OCI-LY7 (cell line): ENCODE measurements at regions of chr12 and their contacts with region 1.

Region 1: GRCh38 chr12:110937104-110937641 is 16.8 kb upstream of the MYL2 start:
- DNase-seq: peak; percentile 62
- H3K4me3 ChIP-seq: no peak overlapping the region
- H3K27ac ChIP-seq: no peak overlapping the region
- H3K4me1 ChIP-seq: no peaks in the 10 kb centered on the region
- CTCF ChIP-seq: peak; percentile 99

Region 2: DNA sequence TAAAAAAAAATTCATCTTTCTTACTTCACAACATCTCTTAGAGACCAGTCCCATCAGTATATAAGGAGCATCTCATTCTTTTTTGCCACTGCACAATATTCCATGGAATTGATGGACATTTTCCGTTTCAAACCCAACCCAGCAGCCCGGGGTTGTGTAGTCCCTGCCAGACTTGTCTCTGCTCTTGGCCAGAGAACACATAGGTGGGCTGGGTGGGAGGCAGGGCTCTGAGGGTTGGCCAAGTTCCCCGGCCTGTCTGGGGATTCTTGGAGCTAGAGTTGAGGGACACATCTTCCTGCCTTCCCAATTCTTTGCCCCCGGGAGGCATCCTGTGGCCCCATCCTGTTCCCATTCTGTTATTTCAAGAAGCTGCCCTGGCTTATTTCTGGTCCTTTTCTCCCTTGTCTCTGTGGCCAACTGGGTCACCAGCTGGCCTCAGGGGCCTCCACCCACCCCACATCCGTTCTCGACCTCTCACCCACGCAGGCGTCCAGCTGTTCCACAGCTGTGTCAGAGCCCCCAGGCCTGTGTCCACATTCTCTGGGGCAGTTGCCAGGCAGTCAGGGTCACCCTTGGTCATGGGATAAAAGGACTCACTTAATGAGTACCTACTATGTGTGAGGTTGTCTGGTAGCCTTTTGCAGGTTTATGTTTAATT is 142.4 kb before region 1 on chr12:
- CTCF ChIA-PET with region 1: no interaction called
- POLR2A ChIA-PET with region 1: no interaction called
- intact Hi-C with region 1: no loop called
- DNase-seq: no peak
- H3K4me3 ChIP-seq: no peak overlapping the region
- H3K27ac ChIP-seq: no peak overlapping the region
- H3K4me1 ChIP-seq: peaks cover 3% of the 10 kb centered on the region
- CTCF ChIP-seq: no peak

Region 3: DNA sequence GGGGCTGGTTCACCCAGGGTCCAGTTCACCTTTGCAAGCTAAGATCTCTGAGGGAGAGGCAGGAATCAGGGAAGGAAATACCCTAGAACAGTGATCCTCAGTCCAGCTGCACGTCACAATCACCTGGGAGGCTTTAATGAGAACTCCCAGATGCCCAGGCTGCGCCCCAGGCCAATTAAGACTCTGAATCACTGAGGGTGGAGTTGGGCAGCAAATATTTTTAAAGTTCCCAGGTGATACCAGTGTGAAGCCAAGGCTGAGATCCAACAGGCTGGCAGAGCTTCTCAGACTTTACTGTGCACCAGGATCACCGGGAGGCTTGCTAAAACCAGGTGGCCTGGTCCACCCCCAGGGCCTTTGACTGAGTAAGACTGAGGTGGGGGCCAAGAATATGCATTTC is 40.6 kb before region 1 on chr12:
- CTCF ChIA-PET with region 1: no interaction called
- POLR2A ChIA-PET with region 1: interaction called, 3 read pairs
- intact Hi-C with region 1: loop called (anchors 1 kb)
- DNase-seq: no peak
- H3K4me3 ChIP-seq: no peak overlapping the region
- H3K27ac ChIP-seq: no peak overlapping the region
- H3K4me1 ChIP-seq: no peaks in the 10 kb centered on the region
- CTCF ChIP-seq: no peak

Region 4: GRCh38 chr12:111174251-111174960 is 237.2 kb after region 1 on chr12:
- CTCF ChIA-PET with region 1: no interaction called
- POLR2A ChIA-PET with region 1: no interaction called
- intact Hi-C with region 1: loop called (anchors 5 kb)
- DNase-seq: peak; percentile 38
- H3K4me3 ChIP-seq: no peak overlapping the region
- H3K27ac ChIP-seq: no peak overlapping the region
- H3K4me1 ChIP-seq: peaks cover 8% of the 10 kb centered on the region
- CTCF ChIP-seq: peak; percentile 74

Region 5: DNA sequence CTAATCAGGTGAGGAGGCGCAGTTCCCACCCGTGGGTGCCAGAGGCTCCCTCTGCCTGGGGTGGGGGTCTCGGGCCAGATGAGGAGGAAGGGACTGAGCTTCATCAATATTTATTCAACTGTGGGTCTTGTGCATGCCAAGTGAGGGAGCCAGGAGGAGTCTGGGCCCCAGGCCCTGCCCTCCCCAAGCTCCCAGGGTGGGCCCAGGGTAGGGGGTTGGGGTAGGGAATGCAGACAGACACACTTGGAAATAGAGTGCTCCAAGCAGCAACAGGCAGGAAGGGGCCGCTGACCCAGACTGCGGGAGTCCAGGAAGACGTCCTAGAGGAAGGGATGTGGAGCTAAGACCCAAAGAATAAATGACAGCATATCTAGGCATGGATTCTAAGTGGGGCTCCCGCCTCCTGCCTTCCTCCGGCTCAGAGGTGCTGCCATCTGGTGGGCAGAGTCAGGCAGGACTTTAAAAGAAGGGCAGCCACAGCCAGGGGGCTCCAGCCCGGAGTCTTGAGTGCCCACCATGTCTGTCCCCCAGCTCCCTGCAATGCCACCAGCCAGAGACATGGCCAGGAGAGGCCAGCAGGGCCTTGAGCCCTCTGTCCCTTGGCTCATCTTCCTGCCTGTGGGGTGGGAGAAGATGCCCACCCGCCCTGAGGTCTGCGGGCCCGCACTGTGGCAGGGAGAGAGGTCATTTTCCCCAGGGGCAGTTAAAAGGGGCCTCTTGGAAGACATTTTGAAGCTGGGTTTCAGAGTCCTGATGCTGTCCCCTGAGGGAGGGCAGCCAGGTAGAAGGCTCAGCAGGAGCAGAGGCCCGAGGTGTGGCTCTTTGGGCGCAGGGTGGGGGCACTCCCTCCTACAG is 361.6 kb after region 1 on chr12:
- CTCF ChIA-PET with region 1: no interaction called
- POLR2A ChIA-PET with region 1: no interaction called
- intact Hi-C with region 1: loop called (anchors 1 kb)
- DNase-seq: peak; percentile 62
- H3K4me3 ChIP-seq: no peak overlapping the region
- H3K27ac ChIP-seq: no peak overlapping the region
- H3K4me1 ChIP-seq: no peaks in the 10 kb centered on the region
- CTCF ChIP-seq: peak; percentile 89

Region 6: DNA sequence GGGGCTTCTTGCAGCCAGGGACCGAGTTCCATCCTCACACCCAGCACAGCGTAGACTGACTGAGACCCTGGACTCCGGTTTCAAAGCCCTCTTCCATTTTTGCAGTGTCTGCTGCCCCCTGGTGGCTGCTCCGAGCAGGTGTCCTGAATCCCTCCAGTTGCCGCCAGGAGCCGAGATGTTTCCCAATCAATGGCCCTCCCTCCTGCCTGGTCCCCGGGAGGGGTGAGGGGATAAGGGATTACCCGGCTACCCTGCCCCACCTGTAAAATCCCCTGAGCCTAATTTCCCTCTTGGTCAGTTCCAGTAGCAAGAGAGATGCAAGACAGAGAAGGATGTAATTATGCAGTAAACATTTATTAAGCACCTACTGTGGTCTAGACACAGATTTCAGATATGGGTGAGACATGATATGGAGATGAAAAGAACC is 376.7 kb after region 1 on chr12:
- CTCF ChIA-PET with region 1: no interaction called
- POLR2A ChIA-PET with region 1: no interaction called
- intact Hi-C with region 1: loop called (anchors 1 kb)
- DNase-seq: peak; percentile 63
- H3K4me3 ChIP-seq: no peak overlapping the region
- H3K27ac ChIP-seq: no peak overlapping the region
- H3K4me1 ChIP-seq: no peaks in the 10 kb centered on the region
- CTCF ChIP-seq: peak; percentile 97